ENCODE measurements at regions of chr15 and their contacts with region 1.

Region 1: DNA sequence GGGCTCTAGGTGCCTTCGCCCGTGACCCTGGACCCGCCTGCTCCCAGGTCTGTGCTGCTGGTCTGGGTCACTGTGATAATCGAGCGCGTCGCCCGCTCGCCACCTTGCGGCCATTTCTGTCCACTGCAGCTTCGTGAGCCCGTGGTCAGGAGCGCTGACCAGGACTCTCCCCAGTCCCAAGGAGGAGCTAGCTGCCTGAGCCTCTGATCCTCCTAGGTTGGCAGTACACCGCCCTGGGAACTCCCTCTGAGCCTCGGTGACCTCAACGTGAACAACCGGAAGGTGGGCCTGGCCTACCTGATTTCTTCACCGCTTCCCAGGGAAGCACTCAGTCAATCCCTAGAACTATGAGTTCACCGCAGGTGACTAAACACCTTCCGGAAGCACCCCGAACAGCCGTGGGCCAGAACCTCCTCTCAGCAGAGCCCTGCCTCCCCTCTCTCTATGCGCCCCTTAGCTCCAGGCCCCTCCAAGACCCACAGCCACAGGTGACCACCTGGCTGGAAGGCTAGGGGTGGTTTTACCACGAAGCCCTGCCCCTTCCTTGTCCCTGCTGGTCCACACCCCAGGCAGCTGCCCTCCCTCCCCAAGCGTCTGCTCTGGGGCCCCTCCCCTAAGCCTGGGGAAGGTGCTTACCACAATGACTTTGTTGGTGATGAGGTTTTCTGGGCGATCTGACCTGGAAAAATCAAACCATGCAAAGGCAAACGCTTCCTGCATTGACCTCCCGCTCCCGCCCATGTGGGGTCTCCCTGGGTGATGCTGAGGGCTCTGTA is 9.7 kb downstream of the PLA2G4D start:
- DNase-seq: peak; percentile 67
- H3K4me3 Mint-ChIP-seq: no peak overlapping the region
- H3K27ac Mint-ChIP-seq: no peak overlapping the region
- H3K4me1 Mint-ChIP-seq: peaks cover 5% of the 10 kb centered on the region
- H3K27me3 Mint-ChIP-seq: peaks cover 14% of the 10 kb centered on the region

Region 2: GRCh38 chr15:41621200-41622193 is 463.2 kb before region 1 on chr15:
- CTCF ChIA-PET with region 1: no interaction called
- POLR2A ChIA-PET with region 1: no interaction called
- intact Hi-C with region 1: no loop called
- DNase-seq: peak; percentile 90
- H3K4me3 Mint-ChIP-seq: peak overlapping the region; percentile 76
- H3K27ac Mint-ChIP-seq: peak overlapping the region; percentile 69
- H3K4me1 Mint-ChIP-seq: peaks cover 16% of the 10 kb centered on the region
- H3K27me3 Mint-ChIP-seq: no peaks in the 10 kb centered on the region

Region 3: GRCh38 chr15:41989259-41989933 is 95.3 kb before region 1 on chr15:
- CTCF ChIA-PET with region 1: interaction called, 70 read pairs
- POLR2A ChIA-PET with region 1: no interaction called
- intact Hi-C with region 1: no loop called
- DNase-seq: peak; percentile 91
- H3K4me3 Mint-ChIP-seq: no peak overlapping the region
- H3K27ac Mint-ChIP-seq: no peak overlapping the region
- H3K4me1 Mint-ChIP-seq: no peaks in the 10 kb centered on the region
- H3K27me3 Mint-ChIP-seq: no peaks in the 10 kb centered on the region

Region 4: DNA sequence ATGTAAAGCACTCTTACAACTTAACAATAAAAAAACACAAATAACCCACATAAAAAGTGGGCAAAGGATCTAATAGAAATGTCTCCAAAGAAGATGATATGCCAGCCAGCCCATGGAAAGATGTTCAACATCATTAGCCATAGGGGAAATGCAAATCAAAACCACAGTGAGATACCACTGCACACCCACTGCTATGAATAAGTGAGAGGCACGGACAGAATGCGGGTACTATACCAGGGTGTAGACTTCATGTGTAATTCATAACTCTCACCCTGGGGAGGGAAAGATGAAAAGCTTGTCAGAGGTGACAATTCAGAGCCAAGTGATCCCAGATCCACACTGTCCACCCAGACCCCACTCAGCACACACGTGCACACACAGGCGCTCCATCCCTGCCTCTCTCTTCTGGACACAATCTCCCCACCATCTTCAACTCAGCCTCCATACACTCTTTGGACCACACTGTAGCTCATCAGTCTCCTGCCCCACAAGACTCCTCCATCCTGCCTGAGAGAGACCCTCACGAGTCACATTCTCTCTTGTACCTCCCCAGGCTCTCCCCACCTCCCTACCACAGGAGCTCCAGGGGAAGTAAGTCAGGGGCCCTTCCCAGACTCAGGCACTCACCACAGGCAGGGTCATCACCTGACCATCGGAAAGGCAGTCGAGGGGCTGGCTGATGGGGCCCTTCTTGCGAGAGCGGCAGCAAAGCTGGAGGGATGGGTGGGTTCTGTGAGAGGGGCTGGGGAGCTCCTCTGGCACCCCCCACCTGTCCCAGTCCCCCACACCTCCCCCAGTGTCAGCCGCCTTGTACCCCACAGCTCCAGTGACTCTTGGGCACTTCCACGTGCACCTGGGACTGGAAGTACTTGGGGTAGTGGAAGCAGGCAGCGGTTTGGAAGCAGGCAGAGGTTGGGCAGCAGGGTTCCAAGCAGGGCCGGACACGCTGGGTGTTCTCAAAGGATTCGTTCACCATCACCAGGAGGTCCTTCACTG is 85.1 kb before region 1 on chr15:
- CTCF ChIA-PET with region 1: interaction called, 16 read pairs
- POLR2A ChIA-PET with region 1: no interaction called
- intact Hi-C with region 1: no loop called
- DNase-seq: peak; percentile 30
- H3K4me3 Mint-ChIP-seq: no peak overlapping the region
- H3K27ac Mint-ChIP-seq: no peak overlapping the region
- H3K4me1 Mint-ChIP-seq: peaks cover 6% of the 10 kb centered on the region
- H3K27me3 Mint-ChIP-seq: peaks cover 2% of the 10 kb centered on the region

Region 5: GRCh38 chr15:42016971-42017370 is 67.7 kb before region 1 on chr15:
- CTCF ChIA-PET with region 1: no interaction called
- POLR2A ChIA-PET with region 1: no interaction called
- intact Hi-C with region 1: no loop called
- DNase-seq: no peak
- H3K4me3 Mint-ChIP-seq: no peak overlapping the region
- H3K27ac Mint-ChIP-seq: no peak overlapping the region
- H3K4me1 Mint-ChIP-seq: no peaks in the 10 kb centered on the region
- H3K27me3 Mint-ChIP-seq: peaks cover 1% of the 10 kb centered on the region

Region 6: DNA sequence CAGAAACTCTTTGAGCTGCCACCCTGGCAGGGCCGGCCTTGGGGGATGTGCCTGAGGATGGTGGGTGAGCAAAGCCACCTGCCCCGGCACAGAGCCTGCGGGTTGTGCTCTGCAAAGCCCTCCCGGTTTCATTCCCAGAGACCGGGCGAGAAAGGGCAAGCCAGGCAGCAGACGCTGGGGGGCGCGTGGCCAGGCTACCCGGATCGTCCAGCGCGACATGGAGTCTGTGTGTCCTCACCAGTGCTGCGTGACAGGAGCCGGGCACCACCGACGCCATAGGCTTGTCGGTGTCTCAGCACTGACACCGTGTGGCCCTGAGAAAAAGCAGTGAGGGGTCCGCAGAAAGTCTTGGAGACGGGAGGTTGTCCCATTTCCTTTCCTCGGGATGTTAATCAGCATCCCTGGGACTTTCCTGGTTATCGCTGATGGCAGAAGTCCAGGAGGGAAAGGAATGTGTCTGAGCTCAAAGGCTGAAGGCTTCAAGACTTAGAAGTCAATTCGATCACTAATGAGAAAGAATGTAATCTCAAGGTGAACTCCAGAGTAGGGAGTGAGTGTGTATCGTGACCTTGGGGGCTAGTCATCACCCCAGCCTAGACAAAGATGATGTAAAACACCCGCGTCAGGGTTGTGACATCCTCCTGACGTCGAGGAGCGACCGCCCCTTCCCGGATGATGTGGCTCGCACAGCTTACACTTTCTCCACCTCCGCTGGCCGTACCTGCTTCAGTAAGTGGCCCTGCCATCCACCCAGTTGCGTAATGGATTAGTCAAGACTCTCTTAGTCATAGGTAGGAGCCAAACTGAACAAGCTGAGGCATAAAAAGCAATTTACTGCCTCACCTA is 27.5 kb before region 1 on chr15:
- CTCF ChIA-PET with region 1: interaction called, 15 read pairs
- POLR2A ChIA-PET with region 1: no interaction called
- intact Hi-C with region 1: no loop called
- DNase-seq: peak; percentile 81
- H3K4me3 Mint-ChIP-seq: peak overlapping the region; percentile 48
- H3K27ac Mint-ChIP-seq: no peak overlapping the region
- H3K4me1 Mint-ChIP-seq: peaks cover 13% of the 10 kb centered on the region
- H3K27me3 Mint-ChIP-seq: peaks cover 24% of the 10 kb centered on the region

Region 7: DNA sequence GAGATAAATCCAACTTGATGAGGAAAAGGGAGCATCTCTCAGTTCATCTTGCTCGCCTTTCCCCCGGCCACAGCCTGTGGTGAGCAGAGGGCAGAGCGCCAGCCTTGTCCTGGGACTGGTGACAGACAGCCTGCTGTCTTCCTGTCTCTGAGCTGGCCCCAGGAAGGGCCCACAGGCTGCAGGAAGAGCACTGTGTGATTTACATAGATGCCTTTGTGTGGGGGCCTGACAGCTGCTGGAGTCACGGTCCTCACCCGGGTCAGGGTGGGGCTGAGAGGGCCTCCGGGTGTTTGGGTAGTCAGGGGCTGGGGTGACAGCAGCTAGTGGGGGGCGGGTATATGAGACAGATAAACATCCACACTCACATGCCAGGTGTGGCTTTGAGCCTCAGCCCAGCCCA is 19.6 kb before region 1 on chr15:
- CTCF ChIA-PET with region 1: interaction called, 17 read pairs
- POLR2A ChIA-PET with region 1: no interaction called
- intact Hi-C with region 1: no loop called
- DNase-seq: no peak
- H3K4me3 Mint-ChIP-seq: no peak overlapping the region
- H3K27ac Mint-ChIP-seq: no peak overlapping the region
- H3K4me1 Mint-ChIP-seq: peaks cover under 1% of the 10 kb centered on the region
- H3K27me3 Mint-ChIP-seq: peaks cover 16% of the 10 kb centered on the region

Region 8: DNA sequence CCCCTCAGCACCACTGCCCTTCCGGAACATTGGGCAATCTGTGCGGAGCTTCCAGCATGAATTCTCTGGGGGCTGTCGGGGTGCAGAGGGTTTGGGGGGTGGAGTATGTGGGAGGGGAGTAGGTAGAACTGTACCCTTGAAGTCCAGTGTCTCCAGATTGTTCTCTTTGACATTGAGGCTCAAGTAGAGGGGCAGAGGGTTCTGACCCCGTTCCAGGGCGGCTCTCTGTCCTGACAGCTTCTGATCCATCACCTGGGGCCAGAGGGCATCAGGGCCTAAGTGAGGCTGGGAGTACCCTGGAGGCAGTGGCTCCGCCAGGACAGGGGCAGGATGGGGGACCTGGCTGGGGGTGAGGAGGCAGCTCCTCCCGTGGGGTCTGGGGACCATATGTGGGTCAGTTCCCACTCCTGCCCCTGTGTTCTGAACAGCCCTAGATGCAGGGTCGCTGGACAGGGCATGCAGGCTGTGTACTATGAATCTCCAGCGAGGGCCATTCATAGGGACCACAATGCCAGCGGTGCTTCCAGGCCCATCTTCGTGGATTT is 12.4 kb before region 1 on chr15:
- CTCF ChIA-PET with region 1: interaction called, 17 read pairs
- POLR2A ChIA-PET with region 1: no interaction called
- intact Hi-C with region 1: no loop called
- DNase-seq: no peak
- H3K4me3 Mint-ChIP-seq: no peak overlapping the region
- H3K27ac Mint-ChIP-seq: no peak overlapping the region
- H3K4me1 Mint-ChIP-seq: no peaks in the 10 kb centered on the region
- H3K27me3 Mint-ChIP-seq: peaks cover 4% of the 10 kb centered on the region

Region 9: GRCh38 chr15:42137431-42138261 is 53.0 kb after region 1 on chr15:
- CTCF ChIA-PET with region 1: interaction called, 26 read pairs
- POLR2A ChIA-PET with region 1: no interaction called
- intact Hi-C with region 1: loop called (anchors 5 kb)
- DNase-seq: peak; percentile 15
- H3K4me3 Mint-ChIP-seq: no peak overlapping the region
- H3K27ac Mint-ChIP-seq: no peak overlapping the region
- H3K4me1 Mint-ChIP-seq: no peaks in the 10 kb centered on the region
- H3K27me3 Mint-ChIP-seq: peaks cover 3% of the 10 kb centered on the region

Measured in activated CD4-positive, alpha-beta memory T cell treated with anti-CD3 and anti-CD28 coated beads for 36 hours (primary cell).